SK-N-SH (cell line): ENCODE measurements at regions of chr13 and their contacts with region 1.

Region 1: GRCh38 chr13:27270594-27271520 is at the start of gene RASL11A:
- DNase-seq: peak; percentile 92
- H3K4me3 ChIP-seq: peak within 1 kb of the TSS; percentile 80 to 84
- H3K27ac ChIP-seq: peak within 1 kb of the TSS; percentile 64 to 71
- H3K4me1 ChIP-seq: peaks cover 6 to 14% of the 10 kb centered on the region in 2 experiments; a peak in 1 of 4 replicates
- H3K27me3 ChIP-seq: no peaks in the 10 kb centered on the region
- CTCF ChIP-seq: peak; percentile 93
- EP300 ChIP-seq: no peak
- RAD21 ChIP-seq: no peak
- polyA plus RNA-seq, gene RASL11A: 1.2 and 2.7 TPM in 2 replicates

Region 2: GRCh38 chr13:27283906-27284493 is 13.1 kb after region 1 on chr13:
- CTCF ChIA-PET with region 1: interaction called, 20 read pairs
- POLR2A ChIA-PET with region 1: no interaction called
- DNase-seq: peak; percentile 28
- H3K4me3 ChIP-seq: no peak overlapping the region
- H3K27ac ChIP-seq: no peak overlapping the region
- H3K4me1 ChIP-seq: no peaks in the 10 kb centered on the region
- H3K27me3 ChIP-seq: no peaks in the 10 kb centered on the region
- CTCF ChIP-seq: peak; percentile 51
- EP300 ChIP-seq: no peak
- RAD21 ChIP-seq: peak; percentile 77

Region 3: DNA sequence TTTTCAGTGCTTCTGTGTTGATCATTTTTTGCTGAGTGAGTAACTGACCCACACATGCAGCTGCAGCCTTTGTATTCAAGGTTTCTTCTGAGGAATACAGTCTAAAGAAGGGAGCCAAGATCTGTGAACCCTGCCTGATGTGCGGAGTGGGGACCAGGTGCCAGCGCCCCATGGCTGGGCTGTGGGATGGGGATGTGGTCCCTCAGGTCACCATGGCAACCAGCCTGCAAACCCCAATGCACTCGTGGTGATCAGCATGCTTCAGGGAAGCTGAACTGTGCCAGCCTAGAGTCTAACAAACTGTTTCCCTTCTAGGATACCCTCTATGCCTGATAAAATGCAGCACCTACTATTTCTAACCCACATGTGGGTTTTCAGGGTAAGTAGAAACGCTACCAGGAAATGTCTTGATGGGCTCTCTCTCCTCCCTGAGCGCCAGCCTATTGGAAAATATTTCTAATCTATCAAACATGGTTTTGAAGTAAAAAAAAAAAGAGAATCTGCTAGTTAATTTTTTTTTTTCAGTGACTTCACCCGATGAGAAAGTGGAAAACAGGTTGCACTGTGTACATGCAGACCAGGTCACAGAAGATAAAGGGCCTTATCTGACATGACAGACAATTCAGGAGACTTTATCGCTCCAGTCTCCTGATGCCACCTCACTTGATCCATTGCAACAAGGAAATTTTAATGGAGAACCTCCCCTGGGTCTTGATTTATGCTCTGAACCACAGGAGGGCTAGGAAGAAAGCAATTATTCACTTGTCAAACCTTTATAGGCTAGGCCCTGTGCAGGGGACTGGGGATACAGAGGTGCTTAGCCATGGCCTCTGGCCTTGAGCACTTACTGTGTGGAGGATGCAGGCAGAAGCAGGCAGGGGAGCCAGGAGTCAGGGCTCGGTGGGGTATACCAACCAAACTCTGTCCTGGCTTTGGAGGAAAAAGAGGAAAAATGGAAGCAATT is 50.9 kb after region 1 on chr13:
- CTCF ChIA-PET with region 1: no interaction called
- POLR2A ChIA-PET with region 1: no interaction called
- DNase-seq: no peak
- H3K4me3 ChIP-seq: no peak overlapping the region
- H3K27ac ChIP-seq: no peak overlapping the region
- H3K4me1 ChIP-seq: no peaks in the 10 kb centered on the region
- H3K27me3 ChIP-seq: peaks cover 61% of the 10 kb centered on the region
- CTCF ChIP-seq: no peak
- EP300 ChIP-seq: no peak
- RAD21 ChIP-seq: no peak